ENCODE measurements at regions of chr9 and their contacts with region 1.

Region 1: GRCh38 chr9:130042833-130043653 is at the start of gene FNBP1:
- DNase-seq: peak; percentile 92
- ATAC-seq: peak; percentile 95
- total RNA-seq, gene FNBP1: 24.2 TPM

Region 2: GRCh38 chr9:129333953-129334724 is 708.9 kb before region 1 on chr9:
- intact Hi-C with region 1: no loop called
- DNase-seq: peak; percentile 97
- ATAC-seq: peak; percentile 92

Region 3: GRCh38 chr9:129968690-129969501 is 74.1 kb before region 1 on chr9:
- intact Hi-C with region 1: loop called (anchors 5 kb)
- DNase-seq: no peak
- ATAC-seq: no peak